Astrocyte of the cerebellum (primary cell): ENCODE measurements at regions of chr13 and their contacts with region 1.

Region 1: DNA sequence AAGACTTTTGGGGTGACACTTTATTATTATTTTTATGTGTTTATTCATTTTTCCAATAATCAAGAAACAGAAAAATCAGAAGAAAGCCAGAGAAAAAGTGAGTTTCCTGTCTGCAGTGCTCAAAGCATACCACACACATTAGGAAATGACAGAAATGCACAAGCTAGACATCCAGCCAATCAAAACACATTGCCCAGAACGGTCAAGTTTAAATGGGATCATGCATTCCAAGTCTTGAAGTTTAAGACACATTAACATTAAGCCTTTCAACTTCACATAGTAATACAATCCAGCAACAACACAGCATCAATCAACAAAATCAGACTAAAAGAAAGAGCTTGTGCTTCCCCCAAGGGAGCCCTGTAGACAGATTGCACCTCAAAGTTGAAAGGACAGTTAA is 28.7 kb upstream of the MEDAG start:
- DNase-seq: no peak
- H3K4me3 ChIP-seq: no peak overlapping the region
- CTCF ChIP-seq: no peak

Region 2: DNA sequence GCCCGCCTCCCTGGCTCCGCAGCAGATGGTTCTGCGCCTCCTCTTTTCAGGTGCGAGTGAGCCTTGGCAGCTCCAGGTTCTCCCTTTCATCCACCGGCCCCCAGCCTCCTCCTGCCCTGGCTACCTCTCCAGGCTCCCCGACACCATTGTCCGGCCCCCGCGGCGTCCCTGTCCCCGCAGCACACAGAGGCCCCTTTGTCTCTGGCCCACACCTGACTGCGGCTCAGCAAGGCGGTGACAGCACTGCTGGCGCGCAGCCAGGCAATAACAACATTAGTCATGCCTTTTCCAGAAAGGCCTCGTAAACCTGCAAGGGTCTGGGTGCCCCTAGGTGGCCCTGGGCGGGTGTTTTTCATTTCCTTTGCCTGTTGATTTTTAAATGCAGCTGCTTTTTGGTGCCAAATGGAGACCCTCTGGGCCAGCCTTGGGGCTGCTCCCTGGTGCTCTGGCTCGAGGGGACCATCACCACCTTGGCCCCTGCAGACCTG is 44.4 kb before region 1 on chr13:
- in situ Hi-C with region 1: no loop called
- DNase-seq: no peak
- H3K4me3 ChIP-seq: no peak overlapping the region
- CTCF ChIP-seq: no peak

Region 3: GRCh38 chr13:30847650-30848307 is 29.6 kb before region 1 on chr13:
- in situ Hi-C with region 1: no loop called
- DNase-seq: peak; percentile 99
- H3K4me3 ChIP-seq: no peak overlapping the region
- CTCF ChIP-seq: no peak

Region 4: GRCh38 chr13:30927595-30927994 is 50.3 kb after region 1 on chr13:
- in situ Hi-C with region 1: loop called (anchors 5 kb)
- DNase-seq: no peak
- H3K4me3 ChIP-seq: no peak overlapping the region
- CTCF ChIP-seq: no peak

Region 5: GRCh38 chr13:30963791-30964190 is 86.5 kb after region 1 on chr13:
- in situ Hi-C with region 1: no loop called
- DNase-seq: no peak
- H3K4me3 ChIP-seq: no peak overlapping the region
- CTCF ChIP-seq: no peak

Region 6: DNA sequence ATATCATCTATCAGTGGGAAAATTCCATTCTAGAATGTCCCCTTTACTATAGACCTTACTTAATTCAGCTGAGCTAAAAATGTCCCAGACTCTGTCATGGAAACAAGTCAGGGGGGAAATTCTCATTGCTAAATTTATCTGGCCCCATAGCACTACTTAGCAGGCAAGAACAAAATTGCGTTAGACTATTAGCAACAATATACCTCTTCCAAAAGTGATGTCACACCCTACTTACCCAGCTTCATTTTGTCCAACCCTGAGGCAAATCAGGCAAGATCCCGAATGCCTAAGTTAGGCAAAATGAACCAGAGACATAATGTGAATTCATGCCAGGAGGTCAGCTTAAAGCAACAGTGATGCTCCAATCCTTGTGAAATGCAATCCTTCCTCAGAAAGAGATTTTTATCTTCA is 1247.9 kb after region 1 on chr13:
- in situ Hi-C with region 1: no loop called
- DNase-seq: no peak
- H3K4me3 ChIP-seq: no peak overlapping the region
- CTCF ChIP-seq: no peak